ENCODE measurements at regions of chr4 and their contacts with region 1.

Region 1: DNA sequence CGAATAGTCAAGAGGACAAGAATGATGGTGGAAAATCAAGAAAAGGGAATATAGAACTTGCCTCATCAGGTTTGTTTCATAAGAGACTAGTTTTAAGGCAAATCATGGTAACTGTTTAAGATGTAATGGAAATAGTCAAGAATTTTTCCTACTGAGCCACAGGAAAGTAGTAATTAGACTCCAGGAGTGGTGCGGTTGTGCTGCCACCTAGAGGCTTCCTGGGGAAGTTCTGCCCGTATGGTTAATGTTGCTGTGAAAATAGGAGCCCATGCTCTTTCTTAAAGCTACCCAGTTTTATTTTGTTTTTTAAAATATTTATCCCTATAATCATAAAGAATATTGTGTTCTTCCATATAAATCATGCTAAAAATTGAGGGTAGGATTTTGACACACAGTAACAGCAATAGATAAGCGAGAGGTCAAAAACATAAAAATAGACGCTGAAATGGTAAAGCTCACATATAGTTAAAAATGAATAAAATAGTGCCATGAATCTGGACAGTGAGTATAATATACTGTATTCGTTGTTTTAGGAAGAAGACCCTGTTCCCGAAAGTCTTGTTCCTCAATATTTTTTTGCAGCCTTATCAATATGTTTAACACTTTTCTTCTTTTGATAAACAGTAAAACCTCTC is 87.0 kb downstream of the PHOX2B start:
- DNase-seq: peak; percentile 50 to 74
- ATAC-seq: peak; percentile 41 to 81 (median 66)
- H3K4me3 ChIP-seq: no peak overlapping the region
- H3K27ac ChIP-seq: no peak overlapping the region
- H3K4me1 ChIP-seq: peaks cover 11% of the 10 kb centered on the region
- H3K27me3 ChIP-seq: no peaks in the 10 kb centered on the region
- CTCF ChIP-seq: peak; percentile 97

Region 2: DNA sequence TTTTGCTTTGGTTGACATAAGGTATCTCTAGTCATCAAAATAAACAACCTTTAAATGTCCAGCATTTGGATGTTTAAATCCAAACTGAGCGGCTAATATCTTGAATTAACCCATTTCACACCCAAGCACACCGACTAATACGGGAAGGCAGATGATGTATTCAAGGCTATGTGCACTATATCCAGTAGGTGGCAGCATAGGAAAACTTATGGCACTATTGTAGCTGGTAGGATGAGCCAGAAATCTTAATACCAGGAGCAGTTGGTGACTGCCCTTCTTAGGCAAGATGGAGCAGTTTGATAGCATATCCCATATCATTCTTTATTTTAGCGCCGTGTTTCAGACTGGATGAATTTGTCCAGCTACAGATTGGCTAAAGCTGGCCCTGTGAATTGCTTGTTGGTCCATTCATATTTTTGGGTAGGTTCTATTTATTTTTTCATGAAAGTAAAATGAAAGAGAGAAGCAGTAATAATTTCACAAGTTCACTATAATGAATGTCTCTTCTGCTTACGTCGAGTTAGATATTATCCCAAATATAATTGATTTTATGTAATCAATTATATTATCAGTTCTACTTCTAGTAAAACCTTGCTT is 380.4 kb before region 1 on chr4:
- intact Hi-C with region 1: loop called (anchors 1 to 2 kb)
- DNase-seq: no peak
- ATAC-seq: peak; percentile 98 to 99 (median 98)
- H3K4me3 ChIP-seq: peak overlapping the region; percentile 37
- H3K27ac ChIP-seq: no peak overlapping the region
- H3K4me1 ChIP-seq: no peaks in the 10 kb centered on the region
- H3K27me3 ChIP-seq: no peaks in the 10 kb centered on the region
- CTCF ChIP-seq: peak; percentile 93